MCF 10A (cell line): ENCODE measurements at regions of chr7 and their contacts with region 1.

Region 1: DNA sequence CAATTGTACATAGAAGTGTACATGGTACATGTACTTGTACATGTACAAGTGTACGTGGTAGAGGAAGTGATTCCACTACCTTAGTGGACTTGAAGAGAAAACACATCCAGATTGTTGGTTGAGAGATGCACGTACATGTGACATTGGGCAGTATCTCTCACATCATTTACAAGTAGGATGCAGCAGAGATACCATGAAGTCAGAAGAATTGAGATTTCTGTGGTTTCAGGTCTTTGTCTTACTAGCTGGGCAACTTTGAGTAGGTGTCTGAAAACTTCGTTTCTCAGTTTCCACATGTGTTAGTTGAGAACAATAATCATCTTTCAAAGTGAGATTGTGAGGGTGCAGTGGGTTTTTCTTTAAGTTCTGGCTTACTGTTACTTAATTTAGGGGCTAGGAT is 21.5 kb downstream of the CLDN12 start:
- DNase-seq: no peak
- H3K4me3 Mint-ChIP-seq: no peak overlapping the region
- H3K27ac Mint-ChIP-seq: no peak overlapping the region
- H3K4me1 Mint-ChIP-seq: peaks cover 7% of the 10 kb centered on the region
- H3K27me3 Mint-ChIP-seq: no peaks in the 10 kb centered on the region
- CTCF ChIP-seq: no peak

Region 2: DNA sequence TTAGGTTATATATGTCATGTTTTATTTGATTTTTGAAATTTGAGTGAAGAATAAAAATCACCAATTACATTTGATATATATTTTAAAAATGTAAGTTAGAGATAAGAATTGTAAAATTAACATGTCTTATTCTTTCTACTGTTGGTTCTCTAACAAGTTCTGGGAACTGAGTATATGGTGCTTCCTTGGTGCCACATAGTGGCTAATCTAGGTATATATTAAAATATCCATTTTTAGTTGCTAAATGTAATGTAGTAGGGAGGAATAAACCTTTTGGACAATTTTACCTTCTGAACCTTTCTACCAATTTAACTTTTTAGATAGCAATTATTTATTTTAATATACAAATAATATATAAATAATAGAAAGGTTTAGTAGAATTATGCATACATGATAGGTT is 162.3 kb before region 1 on chr7:
- CTCF ChIA-PET with region 1: interaction called, 10 read pairs
- POLR2A ChIA-PET with region 1: no interaction called
- intact Hi-C with region 1: loop called (anchors 2 kb)
- DNase-seq: peak; percentile 44
- H3K4me3 Mint-ChIP-seq: no peak overlapping the region
- H3K27ac Mint-ChIP-seq: no peak overlapping the region
- H3K4me1 Mint-ChIP-seq: no peaks in the 10 kb centered on the region
- H3K27me3 Mint-ChIP-seq: no peaks in the 10 kb centered on the region
- CTCF ChIP-seq: peak; percentile 33

Region 3: GRCh38 chr7:90312745-90313144 is 112.0 kb before region 1 on chr7:
- CTCF ChIA-PET with region 1: interaction called, 25 read pairs
- POLR2A ChIA-PET with region 1: no interaction called
- intact Hi-C with region 1: loop called (anchors 1 kb)
- DNase-seq: peak; percentile 17
- H3K4me3 Mint-ChIP-seq: no peak overlapping the region
- H3K27ac Mint-ChIP-seq: no peak overlapping the region
- H3K4me1 Mint-ChIP-seq: no peaks in the 10 kb centered on the region
- H3K27me3 Mint-ChIP-seq: peaks cover 15% of the 10 kb centered on the region
- CTCF ChIP-seq: peak; percentile 28

Region 4: GRCh38 chr7:90346336-90347125 is 78.2 kb before region 1 on chr7 and contains the start of gene GTPBP10:
- CTCF ChIA-PET with region 1: interaction called, 3 read pairs
- POLR2A ChIA-PET with region 1: no interaction called
- intact Hi-C with region 1: loop called (anchors 1 kb)
- DNase-seq: peak; percentile 91
- H3K4me3 Mint-ChIP-seq: peak within 1 kb of the TSS; percentile 94
- H3K27ac Mint-ChIP-seq: peak within 1 kb of the TSS; percentile 95
- H3K4me1 Mint-ChIP-seq: peaks cover 20% of the 10 kb centered on the region
- H3K27me3 Mint-ChIP-seq: no peaks in the 10 kb centered on the region
- CTCF ChIP-seq: peak; percentile 58
- total RNA-seq, gene GTPBP10: 41.6 and 51.1 TPM in 2 replicates

Region 5: GRCh38 chr7:90412458-90413184 is 12.1 kb before region 1 on chr7:
- CTCF ChIA-PET with region 1: interaction called, 27 read pairs
- POLR2A ChIA-PET with region 1: no interaction called
- intact Hi-C with region 1: no loop called
- DNase-seq: peak; percentile 48
- H3K4me3 Mint-ChIP-seq: no peak overlapping the region
- H3K27ac Mint-ChIP-seq: no peak overlapping the region
- H3K4me1 Mint-ChIP-seq: peaks cover 1% of the 10 kb centered on the region
- H3K27me3 Mint-ChIP-seq: no peaks in the 10 kb centered on the region
- CTCF ChIP-seq: peak; percentile 44